WTC11 (cell line): ENCODE measurements at regions of chr5 and their contacts with region 1.

Region 1: DNA sequence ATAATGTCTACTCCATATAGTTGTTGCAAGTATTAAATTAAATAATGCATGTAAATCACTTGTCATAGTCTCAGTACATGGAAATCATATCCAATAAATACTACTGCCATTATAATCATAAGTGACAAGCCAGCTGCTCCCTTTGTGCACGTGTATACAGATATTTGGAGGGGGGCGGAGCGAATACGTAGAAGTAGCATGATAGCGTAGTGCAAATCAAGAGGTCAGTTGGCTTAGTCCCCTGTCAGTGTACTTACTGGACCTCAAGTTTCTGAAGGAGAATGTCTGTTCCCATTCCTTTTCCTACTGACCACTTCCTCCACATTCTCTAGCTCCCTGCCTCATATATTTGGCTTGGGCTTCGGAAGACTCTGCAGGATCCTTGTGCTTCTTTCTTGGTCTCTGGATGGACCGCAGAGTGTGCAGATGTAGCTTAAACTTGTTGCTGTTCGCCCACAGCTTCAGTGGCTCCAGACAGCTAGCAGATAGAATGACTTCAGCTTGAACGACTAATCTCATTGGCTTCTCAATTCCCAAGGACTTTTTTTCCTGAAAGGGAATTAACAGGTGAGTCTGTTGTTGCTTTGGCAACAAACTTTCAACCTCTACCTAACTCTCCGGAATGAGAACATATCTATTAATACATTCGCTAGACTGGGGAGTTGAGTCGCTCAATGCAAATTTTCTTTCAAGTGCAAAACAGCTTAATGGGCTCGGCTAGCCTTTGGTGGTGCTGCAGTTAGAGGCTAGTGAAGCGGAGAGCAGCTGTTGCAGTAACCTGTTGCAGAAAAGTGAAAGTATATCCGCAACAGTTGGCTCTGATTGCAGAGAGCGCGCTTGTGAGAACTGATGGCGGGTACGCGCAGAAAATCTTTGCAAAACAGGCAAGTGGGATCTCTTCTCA is at the start of gene PCDHB1:
- DNase-seq: peak; percentile 26
- ATAC-seq: peak; percentile 80
- H3K4me3 Mint-ChIP-seq: peak within 1 kb of the TSS; percentile 82
- H3K27ac Mint-ChIP-seq: peak within 1 kb of the TSS; percentile 73
- H3K4me1 Mint-ChIP-seq: peaks cover 13% of the 10 kb centered on the region
- H3K27me3 Mint-ChIP-seq: peaks cover 45% of the 10 kb centered on the region
- CTCF ChIP-seq: no peak
- total RNA-seq, gene PCDHB1: 0.09 to 0.13 TPM (median 0.11 TPM) in 3 replicates

Region 2: GRCh38 chr5:140868721-140869554 is 181.9 kb before region 1 on chr5 and contains the start of gene PCDHA11:
- CTCF ChIA-PET with region 1: interaction called, 16 read pairs
- POLR2A ChIA-PET with region 1: interaction called, 3 read pairs
- DNase-seq: no peak
- ATAC-seq: peak; percentile 93
- H3K4me3 Mint-ChIP-seq: peak within 1 kb of the TSS; percentile 88
- H3K27ac Mint-ChIP-seq: peak within 1 kb of the TSS; percentile 78
- H3K4me1 Mint-ChIP-seq: peaks cover 16% of the 10 kb centered on the region
- H3K27me3 Mint-ChIP-seq: no peaks in the 10 kb centered on the region
- CTCF ChIP-seq: no peak
- total RNA-seq, gene PCDHA11: 5.8 to 8.7 TPM (median 7.9 TPM) in 3 replicates

Region 3: GRCh38 chr5:140875066-140876065 is 175.5 kb before region 1 on chr5 and contains the start of gene PCDHA12:
- CTCF ChIA-PET with region 1: interaction called, 12 read pairs
- POLR2A ChIA-PET with region 1: no interaction called
- DNase-seq: no peak
- ATAC-seq: peak; percentile 59
- H3K4me3 Mint-ChIP-seq: peak within 1 kb of the TSS; percentile 99
- H3K27ac Mint-ChIP-seq: peak within 1 kb of the TSS; percentile 93
- H3K4me1 Mint-ChIP-seq: peaks cover 28% of the 10 kb centered on the region
- H3K27me3 Mint-ChIP-seq: no peaks in the 10 kb centered on the region
- CTCF ChIP-seq: peak; percentile 42; the same call in 1 of the 2 replicates
- total RNA-seq, gene PCDHA12: 9.6 to 10.7 TPM (median 10.1 TPM) in 3 replicates

Region 4: GRCh38 chr5:140882591-140882899 is 168.3 kb before region 1 on chr5:
- CTCF ChIA-PET with region 1: interaction called, 10 read pairs
- POLR2A ChIA-PET with region 1: no interaction called
- DNase-seq: peak; percentile 69
- ATAC-seq: peak; percentile 70
- H3K4me3 Mint-ChIP-seq: peak overlapping the region; percentile 83
- H3K27ac Mint-ChIP-seq: peak overlapping the region; percentile 58; the same call in 1 of the 2 replicates
- H3K4me1 Mint-ChIP-seq: peaks cover 16% of the 10 kb centered on the region; the same call in 1 of the 2 replicates
- H3K27me3 Mint-ChIP-seq: no peaks in the 10 kb centered on the region
- CTCF ChIP-seq: peak; percentile 21; the same call in 1 of the 2 replicates